Prostate gland (tissue), 2 donors: ENCODE measurements at regions of chr9 and their contacts with region 1.

Region 1: DNA sequence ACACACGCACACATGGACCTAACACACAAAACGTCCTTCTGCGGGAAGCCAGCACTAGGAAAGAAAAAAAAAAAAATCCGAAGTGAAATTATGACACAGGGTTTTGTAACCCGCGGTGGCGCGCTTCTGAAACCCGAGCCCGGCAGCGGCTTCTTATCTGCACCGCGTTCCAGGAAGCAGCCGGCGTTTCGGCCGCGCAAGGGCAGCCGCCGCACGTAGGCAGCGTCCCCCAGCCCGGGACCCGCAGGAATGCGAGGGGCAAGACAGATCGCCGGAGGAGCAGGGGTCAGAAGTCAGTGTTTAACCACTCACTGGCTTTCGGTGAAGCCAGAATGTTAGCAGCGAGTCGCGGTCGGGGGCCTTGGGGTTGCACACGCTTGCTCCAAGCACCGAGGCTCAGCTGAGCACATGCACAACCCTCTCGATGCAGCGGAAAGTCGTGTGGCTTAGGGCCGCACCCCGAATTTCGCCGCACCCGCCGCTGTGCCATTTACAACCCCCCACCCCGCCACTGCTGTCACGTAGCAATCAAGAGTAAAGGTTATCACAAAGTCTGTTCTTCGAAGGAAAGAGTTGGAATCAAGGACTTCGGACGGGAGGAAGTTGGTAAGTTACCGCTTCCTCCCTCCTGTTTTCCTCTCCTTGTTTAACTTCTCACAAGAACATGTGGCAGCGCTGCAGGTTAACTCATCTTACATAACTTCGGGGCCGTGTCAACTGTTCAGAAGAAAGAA is 167.9 kb downstream of the AUH start:
- DNase-seq: peak; percentile 72
- H3K4me3 ChIP-seq: peak overlapping the region; percentile 15 to 29
- H3K27ac ChIP-seq: peak overlapping the region; percentile 90 to 92
- H3K4me1 ChIP-seq: peaks cover 10% of the 10 kb centered on the region
- H3K27me3 ChIP-seq: no peaks in the 10 kb centered on the region
- CTCF ChIP-seq: peak in 1 of 4 experiments; percentile 9
- POLR2A ChIP-seq: peak; percentile 29

Region 2: DNA sequence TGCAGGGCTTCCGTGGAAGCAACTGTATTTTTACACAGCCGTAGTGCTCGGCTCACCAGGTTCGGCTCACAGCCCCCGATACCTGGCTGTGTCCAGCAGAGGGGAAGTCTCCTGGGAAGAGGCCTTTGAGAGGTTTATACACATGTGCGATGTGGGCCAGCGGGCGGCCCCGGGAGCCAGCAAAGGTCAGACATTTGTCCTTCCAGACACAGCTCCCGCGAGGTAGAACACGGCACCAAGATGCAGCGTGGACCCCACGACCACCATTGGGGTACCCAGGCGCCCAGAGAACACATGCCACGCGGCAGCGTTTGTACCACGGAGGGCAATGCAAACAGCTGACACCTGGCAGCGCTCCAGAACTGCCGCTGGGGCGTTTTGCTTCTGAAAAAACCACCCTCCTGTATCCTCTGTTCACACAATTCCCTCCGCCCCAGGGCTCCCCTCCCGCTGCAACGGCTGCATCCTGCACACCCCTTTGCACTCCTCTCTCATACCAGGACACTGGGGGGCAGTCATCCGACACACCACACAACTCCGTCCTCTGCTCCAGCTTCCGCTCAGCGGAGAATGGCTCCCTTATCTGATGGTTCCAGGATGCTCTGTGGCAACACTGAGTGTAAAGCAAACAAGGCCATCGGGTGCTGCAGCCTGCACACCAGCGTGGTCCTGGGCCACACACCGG is 156.9 kb before region 1 on chr9:
- intact Hi-C with region 1: loop called (anchors 5 kb)
- DNase-seq: peak; percentile 86
- H3K4me3 ChIP-seq: no peak overlapping the region
- H3K27ac ChIP-seq: peak overlapping the region; percentile 17 to 42
- H3K4me1 ChIP-seq: no peaks in the 10 kb centered on the region
- H3K27me3 ChIP-seq: no peaks in the 10 kb centered on the region
- CTCF ChIP-seq: peak in 3 of 4 experiments; percentile 61 to 81 (median 74)
- POLR2A ChIP-seq: no peak

Region 3: GRCh38 chr9:91131433-91131839 is 62.4 kb before region 1 on chr9:
- intact Hi-C with region 1: loop called (anchors 5 kb)
- DNase-seq: peak; percentile 71
- H3K4me3 ChIP-seq: no peak overlapping the region
- H3K27ac ChIP-seq: peak overlapping the region in 1 of 2 donors; percentile 22
- H3K4me1 ChIP-seq: peaks cover 5% of the 10 kb centered on the region
- H3K27me3 ChIP-seq: no peaks in the 10 kb centered on the region
- CTCF ChIP-seq: no peak
- POLR2A ChIP-seq: peak; percentile 15

Region 4: GRCh38 chr9:91150998-91151717 is 42.7 kb before region 1 on chr9:
- intact Hi-C with region 1: no loop called
- DNase-seq: no peak
- H3K4me3 ChIP-seq: no peak overlapping the region
- H3K27ac ChIP-seq: no peak overlapping the region
- H3K4me1 ChIP-seq: no peaks in the 10 kb centered on the region
- H3K27me3 ChIP-seq: no peaks in the 10 kb centered on the region
- CTCF ChIP-seq: no peak
- POLR2A ChIP-seq: no peak

Region 5: DNA sequence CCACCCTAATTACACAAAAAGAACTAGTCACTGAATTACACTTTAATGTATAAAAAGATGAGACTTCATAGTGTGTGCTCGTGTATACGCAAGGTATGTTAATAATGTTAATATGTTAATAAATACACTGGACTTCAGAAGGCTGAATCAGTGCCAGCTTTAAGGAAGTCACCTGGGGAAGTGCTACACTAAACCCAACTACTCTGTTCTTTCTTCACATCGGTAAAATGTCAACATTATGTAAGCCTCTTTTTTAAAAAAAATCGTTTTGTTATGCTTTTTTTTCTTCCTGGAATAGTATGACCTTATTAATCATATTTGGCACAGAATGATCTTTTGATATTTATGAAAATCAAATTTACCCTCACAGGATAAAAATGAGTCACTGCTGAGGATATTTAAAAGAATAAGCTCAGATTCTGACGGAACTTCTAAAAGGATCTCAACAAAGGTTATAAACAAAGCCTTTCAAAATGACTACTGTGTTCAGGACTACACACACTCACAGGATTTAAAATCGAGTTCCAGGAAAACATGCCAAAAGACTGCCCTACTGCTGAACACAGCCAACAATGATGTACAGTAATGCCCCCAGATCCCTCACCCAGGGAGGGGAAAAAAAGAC is 92.0 kb after region 1 on chr9:
- intact Hi-C with region 1: no loop called
- DNase-seq: no peak
- H3K4me3 ChIP-seq: no peak overlapping the region
- H3K27ac ChIP-seq: peak overlapping the region in 1 of 2 donors; percentile 41
- H3K4me1 ChIP-seq: peaks cover 3% of the 10 kb centered on the region
- H3K27me3 ChIP-seq: no peaks in the 10 kb centered on the region
- CTCF ChIP-seq: no peak
- POLR2A ChIP-seq: no peak

Region 6: GRCh38 chr9:91361291-91362050 is 167.6 kb after region 1 on chr9 and contains the start of gene AUH:
- intact Hi-C with region 1: loop called (anchors 5 kb)
- DNase-seq: peak; percentile 81
- H3K4me3 ChIP-seq: peak within 1 kb of the TSS; percentile 97 to 100
- H3K27ac ChIP-seq: peak within 1 kb of the TSS; percentile 93 to 94
- H3K4me1 ChIP-seq: peaks cover under 1% of the 10 kb centered on the region
- H3K27me3 ChIP-seq: no peaks in the 10 kb centered on the region
- CTCF ChIP-seq: peak in 1 of 4 experiments; percentile 25
- POLR2A ChIP-seq: peak; percentile 87
- total RNA-seq, gene AUH: 58.0 to 76.1 TPM

Region 7: GRCh38 chr9:91395553-91396471 is 202.0 kb after region 1 on chr9:
- intact Hi-C with region 1: no loop called
- DNase-seq: no peak
- H3K4me3 ChIP-seq: no peak overlapping the region
- H3K27ac ChIP-seq: no peak overlapping the region
- H3K4me1 ChIP-seq: no peaks in the 10 kb centered on the region
- H3K27me3 ChIP-seq: no peaks in the 10 kb centered on the region
- CTCF ChIP-seq: no peak
- POLR2A ChIP-seq: no peak

Region 8: GRCh38 chr9:91803151-91803940 is 609.5 kb after region 1 on chr9:
- intact Hi-C with region 1: no loop called
- DNase-seq: no peak
- H3K4me3 ChIP-seq: no peak overlapping the region
- H3K27ac ChIP-seq: no peak overlapping the region
- H3K4me1 ChIP-seq: no peaks in the 10 kb centered on the region
- H3K27me3 ChIP-seq: no peaks in the 10 kb centered on the region
- CTCF ChIP-seq: no peak
- POLR2A ChIP-seq: no peak

Region 9: DNA sequence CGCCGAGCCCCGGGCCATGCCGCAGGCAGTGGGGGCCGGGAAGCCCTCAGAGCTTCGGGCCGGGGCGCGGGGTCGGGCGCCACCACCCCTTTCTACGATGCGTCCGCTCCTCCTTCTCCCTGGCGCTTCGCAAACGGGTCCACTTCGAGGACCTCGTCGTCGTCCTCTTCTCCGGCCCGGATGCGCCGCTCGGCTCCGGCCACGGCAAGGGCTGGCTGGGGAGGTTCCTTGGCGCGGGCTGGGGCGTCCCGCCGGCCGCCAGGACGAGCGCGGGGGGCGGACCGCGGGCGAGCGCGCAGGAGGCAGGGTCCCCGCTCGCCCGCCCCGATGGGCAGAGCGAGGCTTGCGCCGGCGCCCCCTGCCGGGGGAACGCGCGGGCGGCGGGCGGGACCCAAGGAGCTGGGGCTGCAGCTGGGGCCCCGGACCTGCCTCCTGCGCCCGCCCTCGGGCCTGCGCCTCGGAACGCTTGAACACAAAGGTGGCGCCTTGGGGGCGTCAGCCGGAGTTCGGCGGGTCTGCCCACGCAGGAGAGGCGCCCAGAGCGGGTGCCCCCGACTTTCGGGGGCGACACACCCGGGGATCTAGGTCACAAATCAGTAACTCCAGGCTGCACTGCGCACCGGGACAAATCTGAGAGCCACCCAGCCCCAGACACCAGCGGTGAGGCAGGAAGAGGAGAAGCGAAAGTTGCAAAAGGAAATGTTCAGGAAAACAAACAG is 756.3 kb after region 1 on chr9 and contains the start of gene ROR2:
- intact Hi-C with region 1: loop called (anchors 10 kb)
- DNase-seq: peak; percentile 87
- H3K4me3 ChIP-seq: peak within 1 kb of the TSS; percentile 69 to 83
- H3K27ac ChIP-seq: peak within 1 kb of the TSS; percentile 95 to 96
- H3K4me1 ChIP-seq: peaks cover 6% of the 10 kb centered on the region
- H3K27me3 ChIP-seq: no peaks in the 10 kb centered on the region
- CTCF ChIP-seq: peak; percentile 79 to 97 (median 90)
- POLR2A ChIP-seq: peak; percentile 48
- total RNA-seq, gene ROR2: 37.2 to 43.9 TPM